CD4-positive, alpha-beta T cell (primary cell): ENCODE measurements at regions of chr1 and their contacts with region 1.

Region 1: DNA sequence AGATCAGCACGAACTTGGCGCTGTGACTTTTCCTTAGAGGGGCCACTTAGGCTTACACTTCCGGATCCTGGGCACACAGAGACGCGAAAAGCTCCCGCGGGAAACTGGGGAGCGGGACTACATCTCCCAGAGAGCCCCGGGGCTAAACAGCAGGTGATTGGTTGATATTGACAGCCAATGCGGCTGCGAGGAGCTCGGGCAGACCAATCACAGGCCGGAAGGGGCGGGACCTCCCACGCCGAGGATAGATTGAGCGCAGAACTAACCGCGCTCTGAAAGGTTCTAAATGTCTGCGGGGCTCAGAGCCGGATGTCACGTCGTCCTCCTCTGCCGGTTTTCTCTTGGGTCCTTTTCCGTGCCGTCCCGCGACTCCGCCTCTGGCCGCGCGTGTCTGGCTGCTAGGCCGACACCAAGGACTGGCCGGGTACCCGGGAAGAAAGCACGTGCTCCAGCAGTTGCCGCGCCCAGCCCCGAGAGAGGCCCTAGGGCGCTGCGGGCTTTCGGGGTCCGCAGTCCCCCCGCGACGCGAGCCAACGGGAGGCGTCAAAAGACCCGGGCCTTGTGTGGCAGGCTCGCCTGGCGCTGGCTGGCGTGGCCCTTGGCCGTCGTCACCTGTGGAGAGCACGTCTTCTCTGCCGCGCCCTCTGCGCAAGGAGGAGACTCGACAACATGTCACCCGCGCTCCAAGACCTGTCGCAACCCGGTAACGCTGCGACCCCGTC is at the start of gene MTR:
- DNase-seq: peak; percentile 91 to 98 (median 95)
- ATAC-seq: peak; percentile 91
- H3K4me3 ChIP-seq: peak within 1 kb of the TSS; percentile 89
- H3K4me3 Mint-ChIP-seq: peak within 1 kb of the TSS; percentile 92
- H3K27ac ChIP-seq: peak within 1 kb of the TSS; percentile 88 to 99
- H3K27ac Mint-ChIP-seq: peak within 1 kb of the TSS; percentile 97
- H3K4me1 ChIP-seq: peaks cover 23% of the 10 kb centered on the region
- H3K4me1 Mint-ChIP-seq: peaks cover 48% of the 10 kb centered on the region
- H3K27me3 ChIP-seq: peaks cover 0 to 4% of the 10 kb centered on the region in 2 experiments
- H3K27me3 Mint-ChIP-seq: peaks cover 9% of the 10 kb centered on the region
- CTCF ChIP-seq: no peak
- total RNA-seq, gene MTR: 35.2 to 37.0 TPM

Region 2: GRCh38 chr1:236281654-236282424 is 513.4 kb before region 1 on chr1 and contains the start of gene ERO1B:
- CTCF ChIA-PET with region 1: interaction called, 4 read pairs
- POLR2A ChIA-PET with region 1: interaction called, 6 read pairs
- intact Hi-C with region 1: loop called in 1 of 2 experiments (anchors 2 kb)
- DNase-seq: peak; percentile 92 to 99 (median 98)
- ATAC-seq: peak; percentile 92
- H3K4me3 ChIP-seq: peak within 1 kb of the TSS; percentile 88
- H3K4me3 Mint-ChIP-seq: peak within 1 kb of the TSS; percentile 97
- H3K27ac ChIP-seq: peak within 1 kb of the TSS; percentile 63 to 81
- H3K27ac Mint-ChIP-seq: peak within 1 kb of the TSS; percentile 80
- H3K4me1 ChIP-seq: peaks cover 25% of the 10 kb centered on the region
- H3K4me1 Mint-ChIP-seq: peaks cover 57% of the 10 kb centered on the region
- H3K27me3 ChIP-seq: no peaks in the 10 kb centered on the region
- H3K27me3 Mint-ChIP-seq: no peaks in the 10 kb centered on the region
- CTCF ChIP-seq: no peak
- total RNA-seq, gene ERO1B: 15.2 to 16.5 TPM

Region 3: DNA sequence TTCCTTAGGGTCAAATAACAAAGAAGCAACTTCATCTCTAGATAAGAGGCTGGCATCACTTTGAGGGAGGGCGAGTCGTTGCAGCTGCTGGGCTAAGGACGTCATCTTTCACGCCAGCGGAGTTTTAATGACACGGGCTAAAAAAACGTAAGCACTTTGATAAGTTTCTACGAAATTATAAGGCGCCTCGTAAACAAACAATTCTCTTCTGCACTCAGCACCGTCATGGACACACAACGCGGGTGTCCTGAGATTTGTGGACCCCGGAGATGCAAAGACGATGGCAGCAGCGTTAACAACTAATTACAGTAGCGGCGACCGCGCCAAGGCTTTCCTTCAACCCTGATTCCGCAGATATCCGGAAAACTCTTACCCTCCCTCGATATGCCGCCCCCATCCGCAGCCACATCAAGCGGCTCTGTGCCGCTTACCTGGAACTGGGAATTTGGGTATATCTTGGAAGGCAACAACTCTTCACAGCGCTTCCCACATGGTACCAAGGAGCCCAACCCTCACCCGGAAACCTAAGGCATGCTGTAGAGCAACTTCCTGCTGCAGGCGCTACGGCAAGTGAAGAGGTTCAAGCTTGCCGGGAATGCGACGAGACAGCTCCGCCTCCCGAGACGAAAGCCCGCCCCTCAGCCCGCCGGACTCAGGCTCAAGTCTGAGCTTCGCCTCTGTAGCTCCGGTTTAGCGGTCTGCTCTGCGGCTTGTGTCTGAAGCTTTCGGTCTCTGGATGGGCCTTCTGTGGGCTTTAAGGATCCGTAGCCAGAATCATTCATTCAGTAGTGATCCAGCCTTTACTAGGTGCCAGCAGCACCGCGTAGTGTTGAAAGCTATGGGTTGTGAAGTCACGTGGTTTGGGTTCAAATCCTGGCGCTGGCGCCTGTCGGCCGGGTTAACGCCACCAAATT is 190.9 kb before region 1 on chr1 and contains the start of gene HEATR1:
- CTCF ChIA-PET with region 1: no interaction called
- POLR2A ChIA-PET with region 1: interaction called, 16 read pairs
- intact Hi-C with region 1: loop called in 1 of 2 experiments (anchors 5 kb)
- DNase-seq: peak; percentile 67 to 92 (median 80)
- ATAC-seq: peak; percentile 81
- H3K4me3 ChIP-seq: peak within 1 kb of the TSS; percentile 82
- H3K4me3 Mint-ChIP-seq: peak within 1 kb of the TSS; percentile 98
- H3K27ac ChIP-seq: peak within 1 kb of the TSS in 1 of 2 donors; percentile 65
- H3K27ac Mint-ChIP-seq: peak within 1 kb of the TSS; percentile 96
- H3K4me1 ChIP-seq: peaks cover 14% of the 10 kb centered on the region
- H3K4me1 Mint-ChIP-seq: peaks cover 44% of the 10 kb centered on the region
- H3K27me3 ChIP-seq: peaks cover 13 to 14% of the 10 kb centered on the region in 2 experiments
- H3K27me3 Mint-ChIP-seq: peaks cover 18% of the 10 kb centered on the region
- CTCF ChIP-seq: no peak
- total RNA-seq, gene HEATR1: 34.9 to 37.5 TPM

Region 4: GRCh38 chr1:236759252-236759859 is 35.8 kb before region 1 on chr1:
- CTCF ChIA-PET with region 1: interaction called, 5 read pairs
- POLR2A ChIA-PET with region 1: interaction called, 10 read pairs
- intact Hi-C with region 1: no loop called
- DNase-seq: peak in 4 of 14 experiments; percentile 17 to 74 (median 55)
- ATAC-seq: no peak
- H3K4me3 ChIP-seq: no peak overlapping the region
- H3K4me3 Mint-ChIP-seq: no peak overlapping the region
- H3K27ac ChIP-seq: no peak overlapping the region
- H3K27ac Mint-ChIP-seq: no peak overlapping the region
- H3K4me1 ChIP-seq: peaks cover 3% of the 10 kb centered on the region
- H3K4me1 Mint-ChIP-seq: no peaks in the 10 kb centered on the region
- H3K27me3 ChIP-seq: no peaks in the 10 kb centered on the region
- H3K27me3 Mint-ChIP-seq: no peaks in the 10 kb centered on the region
- CTCF ChIP-seq: peak; percentile 87

Region 5: GRCh38 chr1:237041795-237042525 is 246.8 kb after region 1 on chr1 and contains the start of gene RYR2:
- CTCF ChIA-PET with region 1: no interaction called
- POLR2A ChIA-PET with region 1: no interaction called
- intact Hi-C with region 1: no loop called
- DNase-seq: no peak
- ATAC-seq: no peak
- H3K4me3 ChIP-seq: no peak within 1 kb of the TSS
- H3K4me3 Mint-ChIP-seq: peak within 1 kb of the TSS; percentile 1
- H3K27ac ChIP-seq: no peak within 1 kb of the TSS
- H3K27ac Mint-ChIP-seq: no peak within 1 kb of the TSS
- H3K4me1 ChIP-seq: no peaks in the 10 kb centered on the region
- H3K4me1 Mint-ChIP-seq: peaks cover 14% of the 10 kb centered on the region
- H3K27me3 ChIP-seq: peaks cover 28 to 44% of the 10 kb centered on the region in 2 experiments
- H3K27me3 Mint-ChIP-seq: peaks cover 42% of the 10 kb centered on the region
- CTCF ChIP-seq: no peak
- total RNA-seq, gene RYR2: not detected